ENCODE measurements at regions of chr12 and their contacts with region 1.

Region 1: DNA sequence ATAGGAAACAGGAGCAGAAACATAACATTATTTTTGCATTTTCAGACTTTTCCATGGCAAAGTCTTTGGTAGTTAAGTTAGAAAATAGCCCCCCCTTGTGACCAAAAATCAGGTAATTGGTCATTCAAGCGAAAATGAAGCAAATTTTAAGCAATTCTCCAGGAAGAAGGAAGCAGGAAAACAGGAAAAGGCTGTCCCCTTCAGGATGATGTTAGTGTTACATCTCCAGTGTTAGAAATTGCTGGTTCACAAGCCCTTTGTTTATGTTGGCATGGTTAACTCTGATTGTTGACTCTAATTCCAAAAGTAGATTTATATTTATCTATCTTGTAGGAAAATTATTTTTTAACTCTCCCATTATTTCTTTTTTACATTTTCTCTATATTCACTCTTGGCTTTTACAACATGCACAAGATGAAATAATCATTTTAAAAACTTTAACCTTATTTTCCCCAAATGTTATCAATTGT is 18.8 kb upstream of the GAS2L3 start:
- DNase-seq: peak; percentile 90
- ATAC-seq: peak; percentile 90
- H3K4me3 ChIP-seq: no peak overlapping the region
- H3K27ac ChIP-seq: no peak overlapping the region
- H3K4me1 ChIP-seq: 0 out of 2 replicates have a peak, but pooled peaks cover 2% of the 10 kb centered on the region
- H3K27me3 ChIP-seq: no peaks in the 10 kb centered on the region
- CTCF ChIP-seq: peak; percentile 99; the same call in 1 of the 2 replicates
- POLR2A ChIP-seq: no peak
- RAD21 ChIP-seq: peak; percentile 85

Region 2: DNA sequence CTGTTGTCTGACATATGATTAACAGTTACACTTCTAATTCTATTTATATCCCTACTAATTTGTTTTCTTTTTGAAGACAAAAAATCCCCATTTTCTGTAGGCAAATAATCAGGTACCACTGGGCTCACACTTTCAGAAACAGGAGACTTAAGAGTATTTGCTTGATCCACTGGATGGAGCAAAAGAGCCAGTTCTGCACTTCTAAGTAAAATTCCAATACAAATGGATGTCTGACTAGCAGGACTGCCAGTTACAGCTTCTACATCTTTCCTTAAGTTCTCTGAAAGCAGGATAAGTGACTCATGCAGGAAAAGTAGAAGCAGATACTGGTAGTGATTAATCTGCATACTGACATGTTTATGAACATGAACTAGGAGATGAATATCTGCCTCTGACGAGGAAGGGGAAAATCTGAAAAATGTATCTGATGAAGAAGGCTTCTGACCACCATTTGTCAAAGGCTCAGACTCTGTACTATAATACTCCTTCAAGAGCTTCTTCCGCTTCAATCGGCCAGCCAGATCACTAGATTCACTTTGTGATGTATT is 496.1 kb before region 1 on chr12:
- CTCF ChIA-PET with region 1: no interaction called
- POLR2A ChIA-PET with region 1: no interaction called
- dilution Hi-C with region 1: no loop called
- in situ Hi-C with region 1: no loop called
- intact Hi-C with region 1: loop called (anchors 1 kb)
- DNase-seq: peak; percentile 96
- ATAC-seq: peak; percentile 91
- H3K4me3 ChIP-seq: no peak overlapping the region
- H3K27ac ChIP-seq: no peak overlapping the region
- H3K4me1 ChIP-seq: no peaks in the 10 kb centered on the region
- H3K27me3 ChIP-seq: no peaks in the 10 kb centered on the region
- CTCF ChIP-seq: peak; percentile 58
- POLR2A ChIP-seq: no peak
- RAD21 ChIP-seq: peak; percentile 73

Region 3: GRCh38 chr12:100234598-100235304 is 319.9 kb before region 1 on chr12:
- CTCF ChIA-PET with region 1: interaction called, 5 read pairs
- POLR2A ChIA-PET with region 1: no interaction called
- dilution Hi-C with region 1: no loop called
- in situ Hi-C with region 1: no loop called
- intact Hi-C with region 1: loop called (anchors 1 kb)
- DNase-seq: peak; percentile 86
- ATAC-seq: peak; percentile 94
- H3K4me3 ChIP-seq: no peak overlapping the region
- H3K27ac ChIP-seq: peak overlapping the region; percentile 46; the same call in 1 of the 2 replicates
- H3K4me1 ChIP-seq: peaks cover 3% of the 10 kb centered on the region
- H3K27me3 ChIP-seq: no peaks in the 10 kb centered on the region
- CTCF ChIP-seq: peak; percentile 91
- POLR2A ChIP-seq: no peak
- RAD21 ChIP-seq: peak; percentile 80

Region 4: DNA sequence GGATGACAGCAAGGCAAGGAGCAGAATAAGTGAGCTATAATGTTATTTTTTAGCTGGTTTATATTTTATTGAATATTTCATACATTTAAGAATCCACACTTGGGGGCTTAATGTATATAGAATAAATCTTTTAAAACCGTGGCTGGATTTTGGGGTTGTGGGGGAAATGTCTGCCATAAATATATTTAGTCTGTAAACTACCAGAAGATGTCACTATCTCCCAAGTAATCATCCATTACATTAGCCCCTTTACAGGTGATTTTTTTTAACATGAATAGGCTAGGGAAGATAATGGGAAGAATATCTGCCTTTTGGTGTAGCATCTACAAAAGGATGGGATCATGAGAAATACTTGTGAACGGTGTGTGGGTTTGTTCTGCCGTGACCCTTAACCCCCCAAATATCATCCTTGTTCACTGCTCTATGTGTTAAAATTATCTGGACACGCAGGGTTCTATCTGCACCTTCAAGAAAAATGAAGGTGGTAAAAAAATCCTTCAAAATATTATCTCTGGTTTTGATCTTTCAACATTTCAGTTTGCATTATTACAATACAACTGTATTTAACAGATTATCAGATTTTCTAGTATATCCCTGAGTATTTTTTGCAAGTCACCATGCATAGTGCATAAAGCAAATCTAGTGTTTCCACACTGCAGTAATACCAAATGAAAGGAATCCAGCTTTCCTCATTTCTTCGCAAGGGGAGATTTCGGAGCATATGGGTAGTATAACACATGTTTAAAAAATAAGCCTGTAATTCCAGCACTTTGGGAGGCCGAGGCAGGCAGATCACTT is 205.8 kb before region 1 on chr12:
- CTCF ChIA-PET with region 1: interaction called, 4 read pairs
- POLR2A ChIA-PET with region 1: no interaction called
- dilution Hi-C with region 1: no loop called
- in situ Hi-C with region 1: loop called (anchors 25 kb)
- intact Hi-C with region 1: loop called (anchors 1 kb)
- DNase-seq: peak; percentile 38
- ATAC-seq: peak; percentile 74
- H3K4me3 ChIP-seq: no peak overlapping the region
- H3K27ac ChIP-seq: no peak overlapping the region
- H3K4me1 ChIP-seq: no peaks in the 10 kb centered on the region
- H3K27me3 ChIP-seq: peaks cover 2% of the 10 kb centered on the region; the same call in 1 of the 2 replicates
- CTCF ChIP-seq: peak; percentile 61
- POLR2A ChIP-seq: no peak
- RAD21 ChIP-seq: peak; percentile 70

Region 5: DNA sequence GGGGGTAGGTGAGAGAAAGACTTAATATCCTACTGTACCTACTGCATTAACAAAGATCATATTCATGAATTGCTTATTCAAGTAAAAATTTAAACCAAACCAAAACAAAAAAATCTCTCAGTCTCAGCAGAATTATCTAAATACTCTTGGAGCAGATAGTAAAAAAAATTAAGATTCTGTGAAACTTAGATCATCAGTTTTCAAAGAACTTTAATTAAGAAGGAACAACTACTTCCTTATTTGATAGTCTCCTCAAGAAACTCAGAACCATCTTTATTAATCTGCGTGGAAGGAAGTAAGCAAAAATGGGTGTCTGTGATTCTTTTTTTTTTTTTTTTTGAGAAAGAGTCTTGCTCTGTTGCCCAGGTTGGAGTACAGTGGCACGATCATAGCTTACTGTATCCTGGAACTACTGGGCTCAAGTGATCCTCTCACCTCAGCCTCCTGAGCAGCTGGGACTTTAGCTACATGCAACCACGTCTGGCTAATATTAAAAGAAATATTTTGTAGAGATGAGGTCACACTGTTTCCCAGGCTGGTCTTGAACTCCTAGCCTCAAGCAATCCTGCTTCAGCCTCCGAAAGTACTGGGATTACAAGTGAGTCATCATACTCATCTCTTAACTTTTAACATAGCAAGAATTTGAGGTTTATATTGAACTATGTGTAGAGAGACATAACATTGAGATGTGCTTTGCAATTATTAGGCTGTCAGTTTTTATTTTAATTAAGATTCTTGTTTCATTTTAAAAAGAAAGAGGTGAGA is 56.2 kb after region 1 on chr12:
- CTCF ChIA-PET with region 1: no interaction called
- POLR2A ChIA-PET with region 1: no interaction called
- dilution Hi-C with region 1: no loop called
- in situ Hi-C with region 1: no loop called
- intact Hi-C with region 1: no loop called
- DNase-seq: peak; percentile 32
- ATAC-seq: no peak; the same call in 1 of the 2 replicates
- H3K4me3 ChIP-seq: no peak overlapping the region
- H3K27ac ChIP-seq: no peak overlapping the region
- H3K4me1 ChIP-seq: no peaks in the 10 kb centered on the region
- H3K27me3 ChIP-seq: no peaks in the 10 kb centered on the region
- CTCF ChIP-seq: no peak
- POLR2A ChIP-seq: no peak
- RAD21 ChIP-seq: no peak

Measured in IMR-90 (cell line).